HEK293 (cell line): ENCODE measurements at regions of chr5 and their contacts with region 1.

Region 1: DNA sequence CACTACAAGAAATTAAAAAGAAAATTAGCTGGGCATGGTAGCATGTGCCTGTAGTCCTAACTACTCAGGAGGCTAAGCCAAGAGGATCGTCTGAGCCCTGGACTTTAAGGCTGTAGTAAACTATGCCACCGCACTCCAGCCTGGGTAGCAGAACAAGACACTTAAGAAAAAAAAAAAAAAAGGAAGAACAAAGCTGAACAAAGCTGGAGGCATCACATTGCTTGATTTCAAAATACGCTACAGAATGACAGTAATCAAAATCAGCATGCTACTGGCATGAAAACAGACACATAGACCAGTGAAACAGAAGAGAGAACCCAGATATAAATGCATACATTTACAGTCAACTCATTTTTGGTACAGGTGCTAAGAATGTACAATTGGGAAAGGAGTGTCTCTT is 14.5 kb upstream of the OTULIN start:
- H3K4me3 ChIP-seq: no peak overlapping the region
- H3K27ac ChIP-seq: no peak overlapping the region
- H3K4me1 ChIP-seq: no peaks in the 10 kb centered on the region
- CTCF ChIP-seq: no peak

Region 2: DNA sequence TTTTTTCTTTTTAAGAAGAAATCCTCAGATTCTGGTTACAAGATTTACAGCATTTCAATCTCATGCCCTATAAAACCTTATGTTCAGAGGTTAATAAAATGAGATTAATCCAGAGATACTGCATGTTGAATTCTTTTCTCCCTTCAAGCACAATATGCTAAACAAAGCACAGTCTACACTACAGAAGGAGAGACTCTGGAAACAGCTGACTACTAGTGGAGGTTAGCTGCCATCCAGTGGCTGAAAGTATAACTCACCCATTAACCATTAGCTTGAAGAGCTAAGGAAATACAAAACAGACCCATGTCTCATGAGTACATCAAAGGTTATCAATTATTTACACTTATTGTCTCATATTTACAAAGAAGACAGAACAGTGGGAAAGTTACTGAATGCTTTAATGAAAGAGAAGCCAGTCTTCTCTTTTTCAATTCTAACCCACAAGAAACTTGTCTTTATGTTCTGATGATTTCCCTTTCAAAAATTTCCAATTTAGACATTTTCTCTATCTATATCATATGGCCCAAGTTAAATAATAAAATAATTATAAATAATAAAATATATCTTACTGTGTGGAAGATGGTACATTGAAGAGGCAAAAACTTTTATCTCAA is 692.9 kb before region 1 on chr5:
- CTCF ChIA-PET with region 1: interaction called, 11 read pairs
- POLR2A ChIA-PET with region 1: no interaction called
- H3K4me3 ChIP-seq: no peak overlapping the region
- H3K27ac ChIP-seq: no peak overlapping the region
- H3K4me1 ChIP-seq: no peaks in the 10 kb centered on the region
- CTCF ChIP-seq: peak; percentile 55; the same call in 1 of the 2 replicates

Region 3: GRCh38 chr5:13976867-13977830 is 672.9 kb before region 1 on chr5:
- CTCF ChIA-PET with region 1: interaction called, 42 read pairs
- POLR2A ChIA-PET with region 1: no interaction called
- H3K4me3 ChIP-seq: no peak overlapping the region
- H3K27ac ChIP-seq: no peak overlapping the region
- H3K4me1 ChIP-seq: no peaks in the 10 kb centered on the region
- CTCF ChIP-seq: peak; percentile 32; the same call in 1 of the 2 replicates

Region 4: DNA sequence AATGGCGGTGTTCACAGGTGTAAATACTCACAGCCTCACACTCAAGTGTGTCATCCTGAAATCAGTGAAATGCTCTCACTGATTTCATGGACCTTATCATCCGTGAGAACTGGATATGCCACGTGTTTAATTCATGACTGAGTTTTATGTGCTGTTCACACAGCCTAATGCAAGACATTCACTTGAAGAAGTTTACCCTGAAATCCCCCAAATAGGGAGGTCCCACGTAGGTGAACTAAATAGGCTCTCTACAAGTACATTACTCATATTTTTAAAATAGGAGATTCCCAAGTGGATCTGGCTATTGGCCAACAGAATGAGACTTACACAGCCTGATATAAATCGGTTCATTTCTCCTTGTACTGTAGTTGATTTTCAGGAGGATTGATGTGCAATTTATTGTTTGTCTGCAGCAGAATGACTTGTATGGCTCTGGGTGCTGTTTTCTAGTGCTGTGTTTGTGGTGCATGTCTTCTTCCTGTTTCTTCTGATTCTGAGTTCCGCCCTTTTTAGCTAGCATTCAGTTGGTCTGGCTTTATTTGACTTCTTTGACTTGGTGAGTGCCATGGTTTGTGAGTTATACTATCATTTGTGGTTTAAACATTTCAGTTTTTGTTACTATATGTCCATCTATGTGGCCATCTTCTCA is 481.8 kb before region 1 on chr5:
- CTCF ChIA-PET with region 1: no interaction called
- POLR2A ChIA-PET with region 1: no interaction called
- H3K4me3 ChIP-seq: no peak overlapping the region
- H3K27ac ChIP-seq: 0 out of 2 replicates have a peak overlapping the region, but pooled peaks have one; percentile 3
- H3K4me1 ChIP-seq: peaks cover 61% of the 10 kb centered on the region
- CTCF ChIP-seq: no peak